CD4-positive, alpha-beta memory T cell (primary cell): ENCODE measurements at regions of chr7 and their contacts with region 1.

Region 1: DNA sequence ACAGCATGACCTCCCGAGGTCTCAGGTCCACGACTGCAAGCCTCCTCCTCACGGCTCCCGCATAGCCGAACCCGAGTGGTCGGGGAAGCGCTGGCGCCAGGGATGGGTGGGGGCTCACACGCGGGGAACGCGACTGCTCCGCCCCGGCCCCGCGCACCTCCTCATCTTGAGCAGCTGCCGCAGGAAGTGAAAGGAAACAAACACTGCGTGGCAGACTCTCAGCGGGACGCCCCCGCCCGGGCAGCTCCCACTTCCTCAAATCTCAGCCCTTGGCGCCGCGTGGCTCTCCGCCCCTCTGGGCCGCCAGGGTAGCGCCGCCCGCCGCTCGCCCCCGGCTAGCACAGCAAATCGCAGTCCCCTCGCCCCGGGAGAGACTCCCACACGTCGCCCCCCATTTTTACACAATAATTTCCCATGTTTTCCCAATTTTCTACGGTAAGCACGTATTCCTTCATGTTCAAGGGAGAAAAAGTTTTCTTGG is at the start of gene TMEM243:
- DNase-seq: peak; percentile 84 to 92 (median 87)
- H3K4me3 ChIP-seq: peak within 1 kb of the TSS; percentile 83 to 99
- H3K4me3 Mint-ChIP-seq: peak within 1 kb of the TSS; percentile 97 to 100 (median 99)
- H3K27ac ChIP-seq: peak within 1 kb of the TSS; percentile 92
- H3K27ac Mint-ChIP-seq: peak within 1 kb of the TSS; percentile 98 to 100 (median 99)
- H3K4me1 ChIP-seq: peaks cover 45% of the 10 kb centered on the region
- H3K4me1 Mint-ChIP-seq: peaks cover 26 to 62% (median 37%) of the 10 kb centered on the region in 4 donors
- H3K27me3 ChIP-seq: no peaks in the 10 kb centered on the region
- H3K27me3 Mint-ChIP-seq: peaks cover 0 to 1% of the 10 kb centered on the region in 2 donors
- total RNA-seq, gene TMEM243: 103 to 105 TPM

Region 2: GRCh38 chr7:86955895-86956503 is 263.6 kb before region 1 on chr7:
- CTCF ChIA-PET with region 1: no interaction called
- POLR2A ChIA-PET with region 1: no interaction called
- intact Hi-C with region 1: no loop called
- DNase-seq: no peak
- H3K4me3 ChIP-seq: no peak overlapping the region
- H3K4me3 Mint-ChIP-seq: no peak overlapping the region
- H3K27ac ChIP-seq: no peak overlapping the region
- H3K27ac Mint-ChIP-seq: peak overlapping the region in 2 of 7 donors; percentile 7 to 81
- H3K4me1 ChIP-seq: no peaks in the 10 kb centered on the region
- H3K4me1 Mint-ChIP-seq: peaks cover 0 to 1% (median 0%) of the 10 kb centered on the region in 4 donors
- H3K27me3 ChIP-seq: no peaks in the 10 kb centered on the region
- H3K27me3 Mint-ChIP-seq: peaks cover 0 to 1% of the 10 kb centered on the region in 2 donors

Region 3: GRCh38 chr7:87013836-87014182 is 205.8 kb before region 1 on chr7:
- CTCF ChIA-PET with region 1: no interaction called
- POLR2A ChIA-PET with region 1: no interaction called
- intact Hi-C with region 1: no loop called
- DNase-seq: no peak
- H3K4me3 ChIP-seq: no peak overlapping the region
- H3K4me3 Mint-ChIP-seq: no peak overlapping the region
- H3K27ac ChIP-seq: no peak overlapping the region
- H3K27ac Mint-ChIP-seq: no peak overlapping the region
- H3K4me1 ChIP-seq: no peaks in the 10 kb centered on the region
- H3K4me1 Mint-ChIP-seq: peaks cover 0 to 6% (median 0%) of the 10 kb centered on the region in 4 donors
- H3K27me3 ChIP-seq: no peaks in the 10 kb centered on the region
- H3K27me3 Mint-ChIP-seq: peaks cover 2 to 5% of the 10 kb centered on the region in 2 donors

Region 4: GRCh38 chr7:87059525-87060287 is 159.9 kb before region 1 on chr7 and contains the start of gene ELAPOR2:
- CTCF ChIA-PET with region 1: interaction called, 3 read pairs
- POLR2A ChIA-PET with region 1: interaction called, 11 read pairs
- intact Hi-C with region 1: loop called (anchors 2 kb)
- DNase-seq: peak; percentile 81 to 83 (median 82)
- H3K4me3 ChIP-seq: peak within 1 kb of the TSS; percentile 59 to 70
- H3K4me3 Mint-ChIP-seq: peak within 1 kb of the TSS; percentile 83 to 91 (median 88)
- H3K27ac ChIP-seq: peak within 1 kb of the TSS; percentile 53
- H3K27ac Mint-ChIP-seq: peak within 1 kb of the TSS; percentile 45 to 93 (median 86)
- H3K4me1 ChIP-seq: peaks cover 14% of the 10 kb centered on the region
- H3K4me1 Mint-ChIP-seq: peaks cover 12 to 20% (median 15%) of the 10 kb centered on the region in 4 donors
- H3K27me3 ChIP-seq: no peaks in the 10 kb centered on the region
- H3K27me3 Mint-ChIP-seq: peaks cover 0 to 3% of the 10 kb centered on the region in 2 donors
- total RNA-seq, gene ELAPOR2: 8.8 to 11.8 TPM

Region 5: DNA sequence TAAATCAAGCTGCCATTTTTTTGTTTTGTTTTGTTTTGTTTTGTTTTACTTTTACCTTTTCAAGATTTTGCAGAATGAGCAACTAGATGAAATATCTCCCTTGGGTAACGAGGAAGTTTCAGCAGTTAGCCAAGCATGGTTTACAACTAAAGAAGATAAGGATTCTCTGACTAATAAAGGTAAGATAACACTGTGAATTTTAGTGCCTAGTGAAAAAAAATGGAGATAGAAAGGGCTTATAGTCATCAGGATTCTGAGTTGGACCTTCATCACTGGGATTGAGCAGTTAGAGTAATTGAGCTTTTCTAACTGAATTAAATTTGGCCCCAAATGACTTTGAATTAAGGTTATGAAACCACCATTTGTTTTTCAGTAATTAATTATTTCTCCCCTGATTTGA is 46.1 kb before region 1 on chr7:
- CTCF ChIA-PET with region 1: interaction called, 3 read pairs
- POLR2A ChIA-PET with region 1: interaction called, 25 read pairs
- intact Hi-C with region 1: loop called (anchors 5 kb)
- DNase-seq: no peak
- H3K4me3 ChIP-seq: no peak overlapping the region
- H3K4me3 Mint-ChIP-seq: no peak overlapping the region
- H3K27ac ChIP-seq: no peak overlapping the region
- H3K27ac Mint-ChIP-seq: peak overlapping the region in 5 of 7 donors; percentile 30 to 86 (median 49)
- H3K4me1 ChIP-seq: no peaks in the 10 kb centered on the region
- H3K4me1 Mint-ChIP-seq: peaks cover 20 to 34% (median 29%) of the 10 kb centered on the region in 4 donors
- H3K27me3 ChIP-seq: no peaks in the 10 kb centered on the region
- H3K27me3 Mint-ChIP-seq: no peaks in the 10 kb centered on the region

Region 6: GRCh38 chr7:87206361-87206760 is 13.2 kb before region 1 on chr7:
- CTCF ChIA-PET with region 1: interaction called, 6 read pairs
- POLR2A ChIA-PET with region 1: interaction called, 47 read pairs
- intact Hi-C with region 1: loop called (anchors 2 kb)
- DNase-seq: no peak
- H3K4me3 ChIP-seq: no peak overlapping the region
- H3K4me3 Mint-ChIP-seq: peak overlapping the region in 2 of 8 donors; percentile 39 to 50
- H3K27ac ChIP-seq: no peak overlapping the region
- H3K27ac Mint-ChIP-seq: peak overlapping the region in 3 of 7 donors; percentile 11 to 79 (median 68)
- H3K4me1 ChIP-seq: peaks cover 52% of the 10 kb centered on the region
- H3K4me1 Mint-ChIP-seq: peaks cover 36 to 80% (median 60%) of the 10 kb centered on the region in 4 donors
- H3K27me3 ChIP-seq: no peaks in the 10 kb centered on the region
- H3K27me3 Mint-ChIP-seq: no peaks in the 10 kb centered on the region

Region 7: DNA sequence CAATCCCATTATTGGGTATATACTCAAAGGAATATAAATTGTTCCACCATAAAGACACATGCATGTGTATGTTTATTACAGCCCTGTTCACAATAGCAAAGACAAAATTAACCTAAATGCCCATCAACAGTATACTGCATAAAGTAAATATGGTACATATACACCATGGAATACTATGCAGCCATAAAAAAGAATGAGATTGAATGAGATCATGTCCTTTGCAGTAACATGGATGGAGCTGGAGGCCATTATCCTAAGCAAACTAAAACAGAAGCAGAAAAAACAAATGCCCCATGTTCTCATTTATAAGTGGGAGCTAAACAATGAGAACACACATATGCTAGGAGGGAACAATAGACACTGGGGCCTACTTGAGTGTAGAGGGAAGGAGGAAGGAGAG is 81.2 kb after region 1 on chr7:
- CTCF ChIA-PET with region 1: no interaction called
- POLR2A ChIA-PET with region 1: no interaction called
- intact Hi-C with region 1: no loop called
- DNase-seq: no peak
- H3K4me3 ChIP-seq: no peak overlapping the region
- H3K4me3 Mint-ChIP-seq: no peak overlapping the region
- H3K27ac ChIP-seq: no peak overlapping the region
- H3K27ac Mint-ChIP-seq: no peak overlapping the region
- H3K4me1 ChIP-seq: no peaks in the 10 kb centered on the region
- H3K4me1 Mint-ChIP-seq: no peaks in the 10 kb centered on the region
- H3K27me3 ChIP-seq: no peaks in the 10 kb centered on the region
- H3K27me3 Mint-ChIP-seq: no peaks in the 10 kb centered on the region

Region 8: GRCh38 chr7:87876040-87876868 is 656.7 kb after region 1 on chr7 and contains the starts of genes DBF4 and SLC25A40:
- CTCF ChIA-PET with region 1: no interaction called
- POLR2A ChIA-PET with region 1: interaction called, 12 read pairs
- intact Hi-C with region 1: loop called (anchors 2 kb)
- DNase-seq: peak; percentile 91 to 96 (median 95)
- H3K4me3 ChIP-seq: peak within 1 kb of the TSS; percentile 79 to 80
- H3K4me3 Mint-ChIP-seq: peak within 1 kb of the TSS; percentile 93 to 97 (median 95)
- H3K27ac ChIP-seq: peak within 1 kb of the TSS; percentile 91
- H3K27ac Mint-ChIP-seq: peak within 1 kb of the TSS; percentile 71 to 99 (median 97)
- H3K4me1 ChIP-seq: peaks cover 43% of the 10 kb centered on the region
- H3K4me1 Mint-ChIP-seq: peaks cover 37 to 58% (median 46%) of the 10 kb centered on the region in 4 donors
- H3K27me3 ChIP-seq: no peaks in the 10 kb centered on the region
- H3K27me3 Mint-ChIP-seq: no peaks in the 10 kb centered on the region
- total RNA-seq, gene DBF4: 25.3 to 29.0 TPM
- total RNA-seq, gene SLC25A40: 28.9 to 29.8 TPM